ENCODE measurements at regions of chr2 and their contacts with region 1.

Region 1: GRCh38 chr2:25794544-25795276 is 83.6 kb downstream of the ASXL2 start:
- DNase-seq: peak in 4 of 14 experiments; percentile 10 to 75 (median 57)
- ATAC-seq: peak; percentile 84
- H3K4me3 ChIP-seq: peak overlapping the region; percentile 43
- H3K4me3 Mint-ChIP-seq: peak overlapping the region; percentile 91
- H3K27ac ChIP-seq: peak overlapping the region; percentile 64 to 87
- H3K27ac Mint-ChIP-seq: peak overlapping the region; percentile 97
- H3K4me1 ChIP-seq: peaks cover 23% of the 10 kb centered on the region
- H3K4me1 Mint-ChIP-seq: peaks cover 91% of the 10 kb centered on the region
- H3K27me3 ChIP-seq: no peaks in the 10 kb centered on the region
- H3K27me3 Mint-ChIP-seq: no peaks in the 10 kb centered on the region
- CTCF ChIP-seq: no peak

Region 2: GRCh38 chr2:25825238-25825637 is 30.5 kb after region 1 on chr2:
- CTCF ChIA-PET with region 1: interaction called, 4 read pairs
- POLR2A ChIA-PET with region 1: interaction called, 6 read pairs
- intact Hi-C with region 1: loop called in 1 of 2 experiments (anchors 5 kb)
- DNase-seq: peak in 10 of 14 experiments; percentile 3 to 67 (median 24)
- ATAC-seq: peak; percentile 83
- H3K4me3 ChIP-seq: no peak overlapping the region
- H3K4me3 Mint-ChIP-seq: peak overlapping the region; percentile 6
- H3K27ac ChIP-seq: no peak overlapping the region
- H3K27ac Mint-ChIP-seq: peak overlapping the region; percentile 48
- H3K4me1 ChIP-seq: peaks cover 12% of the 10 kb centered on the region
- H3K4me1 Mint-ChIP-seq: peaks cover 70% of the 10 kb centered on the region
- H3K27me3 ChIP-seq: no peaks in the 10 kb centered on the region
- H3K27me3 Mint-ChIP-seq: no peaks in the 10 kb centered on the region
- CTCF ChIP-seq: no peak

Region 3: GRCh38 chr2:26025509-26025908 is 230.8 kb after region 1 on chr2:
- CTCF ChIA-PET with region 1: no interaction called
- POLR2A ChIA-PET with region 1: no interaction called
- intact Hi-C with region 1: no loop called
- DNase-seq: no peak
- ATAC-seq: no peak
- H3K4me3 ChIP-seq: no peak overlapping the region
- H3K4me3 Mint-ChIP-seq: no peak overlapping the region
- H3K27ac ChIP-seq: no peak overlapping the region
- H3K27ac Mint-ChIP-seq: no peak overlapping the region
- H3K4me1 ChIP-seq: no peaks in the 10 kb centered on the region
- H3K4me1 Mint-ChIP-seq: no peaks in the 10 kb centered on the region
- H3K27me3 ChIP-seq: peaks cover 0 to 4% of the 10 kb centered on the region in 2 experiments
- H3K27me3 Mint-ChIP-seq: no peaks in the 10 kb centered on the region
- CTCF ChIP-seq: no peak

Region 4: DNA sequence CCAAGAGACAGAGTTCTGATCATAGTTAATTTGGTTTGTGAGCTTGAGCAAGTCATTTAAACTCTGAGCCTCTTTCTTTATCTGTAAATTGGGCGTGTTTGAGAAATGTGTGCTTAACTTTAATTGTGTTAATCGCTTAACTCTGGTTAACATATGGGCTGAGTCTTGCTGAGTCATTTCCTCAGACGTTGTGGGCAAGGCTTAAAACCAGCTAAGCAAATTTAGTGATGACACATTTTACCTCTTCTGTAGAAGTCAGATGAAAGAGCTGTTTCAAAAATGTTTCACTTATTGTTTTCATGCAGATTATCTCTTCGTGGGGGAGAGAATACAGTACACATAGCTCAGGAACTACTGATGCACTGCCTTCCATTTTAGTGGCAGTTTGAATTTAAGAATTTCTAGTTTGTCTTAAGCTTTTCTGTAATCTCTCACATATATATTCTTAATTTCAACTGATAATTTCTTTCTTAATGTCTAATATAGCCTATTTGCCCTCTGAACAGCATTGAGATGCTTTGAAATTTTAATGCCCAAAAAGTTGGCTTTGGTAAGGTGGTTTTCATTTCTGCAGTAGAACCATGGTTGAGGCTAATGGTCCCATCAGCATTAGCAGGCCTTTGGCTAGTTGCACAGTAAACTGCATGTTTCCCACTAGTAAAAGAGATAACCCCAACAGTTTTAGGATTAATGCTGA is 274.0 kb after region 1 on chr2:
- CTCF ChIA-PET with region 1: no interaction called
- POLR2A ChIA-PET with region 1: no interaction called
- intact Hi-C with region 1: no loop called
- DNase-seq: peak in 9 of 14 experiments; percentile 10 to 79 (median 30)
- ATAC-seq: peak; percentile 93
- H3K4me3 ChIP-seq: no peak overlapping the region
- H3K4me3 Mint-ChIP-seq: no peak overlapping the region
- H3K27ac ChIP-seq: no peak overlapping the region
- H3K27ac Mint-ChIP-seq: peak overlapping the region; percentile 59
- H3K4me1 ChIP-seq: peaks cover 14% of the 10 kb centered on the region
- H3K4me1 Mint-ChIP-seq: peaks cover 54% of the 10 kb centered on the region
- H3K27me3 ChIP-seq: no peaks in the 10 kb centered on the region
- H3K27me3 Mint-ChIP-seq: no peaks in the 10 kb centered on the region
- CTCF ChIP-seq: no peak